Activated T-helper 1 cell treated with anti-CD3 and anti-CD28 coated beads, Interleukin-12 subunit alpha, Interleukin-12 subunit beta, Interleukin-2, Interleukin-4 antibody, amounts not matched to agents 30 ng/mL and 10 ng/mL and 1 ng/mL, durations not matched to agents 14 hours and 24 hours and 36 hours (primary cell): ENCODE measurements at regions of chr6 and their contacts with region 1.

Region 1: DNA sequence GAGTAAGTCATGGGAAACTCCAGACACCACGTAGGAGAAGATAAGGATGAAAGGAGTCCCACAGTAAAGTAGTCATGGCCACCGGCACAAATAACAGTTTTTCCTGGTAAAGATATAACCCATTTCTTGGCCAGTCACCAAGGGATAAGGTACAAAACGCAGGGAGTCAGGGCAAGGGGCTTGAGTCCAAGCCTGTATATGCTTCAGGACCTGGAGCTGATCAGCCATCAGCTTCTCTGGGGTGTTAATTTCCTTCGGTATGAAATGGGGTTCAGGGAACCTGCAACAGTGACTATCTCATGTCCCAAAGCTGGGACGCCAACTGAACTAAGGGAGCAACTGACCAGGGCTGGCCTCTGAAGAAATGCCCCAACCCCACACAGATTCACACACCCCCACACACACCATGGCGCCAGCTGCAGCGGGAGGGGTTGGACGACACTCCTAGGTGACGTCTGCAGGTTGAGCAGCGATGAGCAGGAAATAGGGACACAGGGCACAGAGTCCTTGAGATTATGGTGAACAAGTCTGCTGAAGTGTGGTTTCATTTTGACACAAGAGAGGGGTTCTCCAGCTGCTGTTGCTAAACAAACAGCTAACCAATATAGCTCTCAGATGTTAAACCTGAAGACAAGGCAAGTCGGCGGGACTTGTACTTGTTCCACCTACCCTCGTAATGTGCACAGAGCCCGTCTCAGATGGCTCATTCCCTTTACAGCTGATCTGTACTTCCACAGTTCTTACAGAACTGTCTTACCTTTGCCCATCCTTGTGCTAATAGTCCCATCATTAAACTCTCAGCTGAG is 7.4 kb upstream of the ADTRP start:
- DNase-seq: peak; percentile 64
- H3K4me3 Mint-ChIP-seq: peak overlapping the region; percentile 28
- H3K27ac Mint-ChIP-seq: peak overlapping the region; percentile 85
- H3K4me1 Mint-ChIP-seq: peaks cover 13% of the 10 kb centered on the region
- H3K27me3 Mint-ChIP-seq: no peaks in the 10 kb centered on the region

Region 2: GRCh38 chr6:11298651-11299420 is 487.1 kb before region 1 on chr6:
- intact Hi-C with region 1: no loop called
- DNase-seq: no peak
- H3K4me3 Mint-ChIP-seq: no peak overlapping the region
- H3K27ac Mint-ChIP-seq: no peak overlapping the region
- H3K4me1 Mint-ChIP-seq: peaks cover 51% of the 10 kb centered on the region
- H3K27me3 Mint-ChIP-seq: no peaks in the 10 kb centered on the region

Region 3: DNA sequence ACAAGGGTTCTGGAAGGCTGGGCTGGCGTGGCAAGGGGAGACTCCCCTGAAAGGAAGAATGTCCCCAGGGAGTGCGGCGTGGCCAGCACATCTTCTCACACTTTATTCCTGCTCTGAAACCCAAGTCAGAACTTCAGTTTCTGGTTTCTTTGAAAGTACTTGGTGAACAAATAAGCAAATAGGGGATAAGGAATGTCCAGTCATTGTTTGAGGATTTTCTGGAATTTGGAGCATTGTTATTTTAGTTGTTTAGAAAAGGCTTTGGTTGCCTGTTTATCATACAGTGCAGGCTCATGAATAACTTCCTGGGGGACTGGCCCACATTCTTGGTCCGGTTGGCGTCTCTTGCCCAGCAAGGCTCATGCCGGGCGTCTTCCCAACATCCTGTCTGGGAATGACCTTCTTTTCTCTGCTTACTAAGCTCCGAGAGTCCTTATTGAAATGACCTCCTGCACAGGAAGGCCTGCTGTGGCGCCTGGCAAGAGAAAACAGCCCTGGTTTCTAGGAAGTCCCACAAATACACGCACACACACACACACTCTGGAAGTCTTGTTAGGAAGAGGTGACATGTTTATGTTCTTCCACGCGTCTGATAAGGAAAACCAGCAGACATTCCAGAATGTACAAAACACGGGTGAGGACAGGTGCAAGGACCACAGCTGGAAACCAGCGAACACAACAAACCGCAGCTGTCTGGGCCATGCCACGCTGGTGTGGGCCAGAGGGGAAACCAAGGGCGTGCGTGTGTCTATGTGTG is 176.5 kb before region 1 on chr6:
- intact Hi-C with region 1: no loop called
- DNase-seq: no peak
- H3K4me3 Mint-ChIP-seq: no peak overlapping the region
- H3K27ac Mint-ChIP-seq: no peak overlapping the region
- H3K4me1 Mint-ChIP-seq: no peaks in the 10 kb centered on the region
- H3K27me3 Mint-ChIP-seq: peaks cover 5% of the 10 kb centered on the region

Region 4: GRCh38 chr6:11806561-11807317 is 20.8 kb after region 1 on chr6:
- intact Hi-C with region 1: loop called (anchors 2 kb)
- DNase-seq: peak; percentile 3
- H3K4me3 Mint-ChIP-seq: peak overlapping the region; percentile 34
- H3K27ac Mint-ChIP-seq: peak overlapping the region; percentile 82
- H3K4me1 Mint-ChIP-seq: peaks cover 53% of the 10 kb centered on the region
- H3K27me3 Mint-ChIP-seq: no peaks in the 10 kb centered on the region

Region 5: DNA sequence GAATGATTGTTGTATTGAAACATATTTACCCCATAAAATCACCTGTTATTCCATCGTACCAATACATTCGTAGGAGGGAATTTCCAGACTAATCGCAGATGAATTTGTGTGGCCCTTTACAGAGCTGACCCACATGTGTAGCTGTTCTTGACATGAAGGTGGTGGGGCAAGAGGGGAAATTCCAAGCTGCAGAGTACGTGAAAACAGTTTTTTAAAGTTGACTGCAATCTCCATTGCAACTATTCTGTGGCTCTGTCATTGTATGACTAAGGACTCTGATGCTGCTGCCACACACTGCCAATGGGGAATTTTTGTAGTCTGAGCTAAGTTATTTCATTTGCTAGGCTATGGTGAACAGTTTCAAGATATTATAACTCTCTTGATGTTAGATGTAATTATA is 39.0 kb after region 1 on chr6:
- intact Hi-C with region 1: loop called (anchors 1 kb)
- DNase-seq: peak; percentile 16
- H3K4me3 Mint-ChIP-seq: no peak overlapping the region
- H3K27ac Mint-ChIP-seq: peak overlapping the region; percentile 79
- H3K4me1 Mint-ChIP-seq: peaks cover 25% of the 10 kb centered on the region
- H3K27me3 Mint-ChIP-seq: peaks cover 1% of the 10 kb centered on the region

Region 6: DNA sequence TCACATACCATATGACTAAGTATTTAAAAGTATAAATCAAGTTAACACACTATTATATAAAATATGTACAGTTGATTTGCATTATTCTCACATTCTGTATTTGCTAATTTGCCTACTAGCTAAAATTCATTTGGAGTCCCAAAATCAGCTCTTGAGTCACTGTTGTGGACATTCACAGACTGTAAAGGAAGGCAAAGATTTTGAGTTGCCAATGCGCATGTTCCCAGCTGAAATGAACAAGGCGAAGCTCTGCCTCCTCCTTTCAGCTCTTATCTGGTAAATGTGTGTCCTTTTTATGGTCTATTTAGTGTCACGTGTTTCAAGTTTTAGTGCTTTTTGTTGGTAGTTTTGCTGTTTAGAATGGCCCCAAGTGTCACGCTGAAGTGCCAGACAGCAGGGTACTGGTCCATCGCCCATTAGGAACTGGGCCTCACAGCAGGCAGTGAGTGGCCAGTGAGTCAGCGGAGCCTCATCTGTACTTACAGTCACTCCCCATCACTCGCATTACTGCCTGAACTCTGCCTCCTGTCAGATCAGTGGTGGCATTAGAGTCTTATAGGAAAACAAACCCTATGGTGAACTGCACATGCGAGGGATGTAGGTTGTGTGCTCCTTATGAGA is 79.8 kb after region 1 on chr6:
- intact Hi-C with region 1: no loop called
- DNase-seq: no peak
- H3K4me3 Mint-ChIP-seq: no peak overlapping the region
- H3K27ac Mint-ChIP-seq: no peak overlapping the region
- H3K4me1 Mint-ChIP-seq: no peaks in the 10 kb centered on the region
- H3K27me3 Mint-ChIP-seq: no peaks in the 10 kb centered on the region

Region 7: DNA sequence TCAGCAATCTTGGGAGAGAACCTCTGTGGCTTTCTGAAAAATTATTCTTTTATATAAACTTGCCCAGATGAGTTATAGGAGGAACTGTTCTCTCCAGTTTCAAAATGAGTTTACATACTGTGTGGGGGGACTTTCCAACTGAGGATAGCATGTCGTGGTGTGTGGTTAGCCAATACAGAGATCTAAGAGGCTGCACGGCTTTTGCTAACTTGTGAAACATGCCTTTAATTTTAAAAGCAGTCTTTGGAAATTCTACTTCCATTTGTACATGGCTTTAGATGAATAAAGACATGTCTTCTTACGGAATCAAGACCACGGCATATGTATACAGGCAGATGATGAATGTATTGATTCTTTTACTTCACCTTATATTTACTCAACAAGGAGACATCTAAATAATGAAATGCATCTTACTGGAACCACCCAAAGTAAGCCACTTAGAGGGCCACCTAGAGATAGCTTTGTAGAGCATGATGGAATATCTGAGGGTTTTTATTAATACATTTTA is 265.9 kb after region 1 on chr6:
- intact Hi-C with region 1: loop called (anchors 5 kb)
- DNase-seq: peak; percentile 76
- H3K4me3 Mint-ChIP-seq: peak overlapping the region; percentile 78
- H3K27ac Mint-ChIP-seq: peak overlapping the region; percentile 96
- H3K4me1 Mint-ChIP-seq: peaks cover 77% of the 10 kb centered on the region
- H3K27me3 Mint-ChIP-seq: no peaks in the 10 kb centered on the region

Region 8: GRCh38 chr6:12241493-12242175 is 455.7 kb after region 1 on chr6:
- intact Hi-C with region 1: loop called (anchors 1 kb)
- DNase-seq: no peak
- H3K4me3 Mint-ChIP-seq: no peak overlapping the region
- H3K27ac Mint-ChIP-seq: peak overlapping the region; percentile 31
- H3K4me1 Mint-ChIP-seq: peaks cover 21% of the 10 kb centered on the region
- H3K27me3 Mint-ChIP-seq: peaks cover 6% of the 10 kb centered on the region